GM10248 (cell line): ENCODE measurements at regions of chr5 and their contacts with region 1.

Region 1: GRCh38 chr5:139787568-139788293 is 7.9 kb upstream of the PSD2 start:
- DNase-seq: peak; percentile 94
- CTCF ChIP-seq: peak; percentile 95

Region 2: DNA sequence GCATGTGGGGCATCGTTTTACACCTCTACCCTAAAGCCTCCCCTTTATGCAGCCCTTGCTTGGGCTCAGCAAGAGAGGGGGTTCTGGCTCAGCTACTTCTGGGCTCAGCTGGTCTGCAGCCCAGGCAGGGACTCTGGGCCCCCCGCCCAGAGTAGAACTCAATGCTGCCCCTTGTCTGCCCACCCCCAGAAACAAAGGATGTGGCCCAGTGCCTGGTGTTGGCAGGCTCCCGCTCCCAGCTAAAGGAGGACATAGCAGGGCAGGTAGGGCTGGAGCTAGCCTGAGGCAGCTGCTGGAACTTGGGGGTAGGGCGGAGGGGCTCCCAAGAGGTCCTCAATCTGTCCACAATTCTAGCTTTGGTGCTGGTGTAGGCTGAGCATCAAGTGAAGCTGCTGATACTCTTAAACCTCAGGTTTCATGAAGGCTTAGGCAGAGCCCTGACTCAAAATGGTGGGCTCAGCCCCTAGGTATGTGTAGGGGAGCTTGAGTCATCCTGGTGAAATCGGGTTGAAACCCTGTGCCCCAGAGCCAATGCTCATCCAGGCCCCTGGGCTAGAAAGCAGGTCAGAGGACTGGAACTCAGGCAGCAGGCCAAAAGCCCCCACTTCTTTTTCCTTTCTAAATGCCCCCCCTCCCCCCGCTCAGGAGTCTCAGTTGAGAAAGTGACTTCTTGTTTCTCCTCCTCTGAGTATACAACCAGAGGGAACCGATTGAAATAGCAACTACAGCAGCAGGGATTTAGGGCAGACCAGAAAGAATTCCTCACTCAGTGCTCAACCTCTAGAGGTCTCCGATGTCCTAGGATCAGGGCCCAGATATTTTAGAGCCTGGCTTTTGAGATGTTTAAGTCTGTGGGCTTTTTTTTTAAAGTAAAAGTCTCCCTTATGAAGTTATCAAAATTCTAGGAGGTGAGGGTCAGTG is 19.3 kb after region 1 on chr5:
- CTCF ChIA-PET with region 1: interaction called, 23 read pairs
- POLR2A ChIA-PET with region 1: no interaction called
- DNase-seq: no peak
- CTCF ChIP-seq: no peak

Region 3: GRCh38 chr5:139863855-139864558 is 76.3 kb after region 1 on chr5:
- CTCF ChIA-PET with region 1: interaction called, 45 read pairs
- POLR2A ChIA-PET with region 1: no interaction called
- DNase-seq: peak; percentile 84
- CTCF ChIP-seq: peak; percentile 74

Region 4: DNA sequence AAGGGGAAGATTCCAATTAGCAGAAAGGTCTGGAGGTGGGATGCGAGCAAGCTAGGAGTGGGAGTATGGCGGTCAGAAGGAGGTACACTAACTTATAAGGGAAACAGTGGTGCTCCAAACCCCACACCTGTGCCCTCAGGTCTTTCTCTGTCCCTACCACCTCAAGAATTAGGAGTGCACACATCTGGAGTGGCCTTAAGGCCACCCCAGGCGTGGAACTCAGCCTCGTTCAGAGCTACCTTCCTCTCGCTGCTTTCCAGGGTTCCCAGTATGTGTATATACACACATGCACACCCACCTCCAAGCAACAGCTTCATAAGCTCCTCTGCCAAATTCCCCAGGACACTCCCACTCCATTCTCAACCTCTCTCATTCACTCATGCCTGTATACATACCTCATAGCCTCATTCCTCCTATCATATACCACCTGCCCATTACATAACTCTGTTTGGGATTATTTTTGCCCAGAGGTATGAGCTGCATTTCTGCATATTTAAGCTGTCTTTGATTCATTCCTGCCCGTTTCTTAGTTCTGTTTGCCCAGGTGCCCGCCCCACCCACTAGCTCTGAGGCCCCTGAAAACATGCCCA is 126.6 kb after region 1 on chr5:
- CTCF ChIA-PET with region 1: interaction called, 10 read pairs
- POLR2A ChIA-PET with region 1: no interaction called
- DNase-seq: no peak
- CTCF ChIP-seq: no peak

Region 5: GRCh38 chr5:139985733-139986132 is 198.0 kb after region 1 on chr5:
- CTCF ChIA-PET with region 1: interaction called, 35 read pairs
- POLR2A ChIA-PET with region 1: no interaction called
- DNase-seq: no peak
- CTCF ChIP-seq: no peak

Region 6: GRCh38 chr5:140151730-140152597 is 364.2 kb after region 1 on chr5:
- CTCF ChIA-PET with region 1: interaction called, 27 read pairs
- POLR2A ChIA-PET with region 1: no interaction called
- DNase-seq: no peak
- CTCF ChIP-seq: no peak